A673 (cell line): ENCODE measurements at regions of chr13 and their contacts with region 1.

Region 1: DNA sequence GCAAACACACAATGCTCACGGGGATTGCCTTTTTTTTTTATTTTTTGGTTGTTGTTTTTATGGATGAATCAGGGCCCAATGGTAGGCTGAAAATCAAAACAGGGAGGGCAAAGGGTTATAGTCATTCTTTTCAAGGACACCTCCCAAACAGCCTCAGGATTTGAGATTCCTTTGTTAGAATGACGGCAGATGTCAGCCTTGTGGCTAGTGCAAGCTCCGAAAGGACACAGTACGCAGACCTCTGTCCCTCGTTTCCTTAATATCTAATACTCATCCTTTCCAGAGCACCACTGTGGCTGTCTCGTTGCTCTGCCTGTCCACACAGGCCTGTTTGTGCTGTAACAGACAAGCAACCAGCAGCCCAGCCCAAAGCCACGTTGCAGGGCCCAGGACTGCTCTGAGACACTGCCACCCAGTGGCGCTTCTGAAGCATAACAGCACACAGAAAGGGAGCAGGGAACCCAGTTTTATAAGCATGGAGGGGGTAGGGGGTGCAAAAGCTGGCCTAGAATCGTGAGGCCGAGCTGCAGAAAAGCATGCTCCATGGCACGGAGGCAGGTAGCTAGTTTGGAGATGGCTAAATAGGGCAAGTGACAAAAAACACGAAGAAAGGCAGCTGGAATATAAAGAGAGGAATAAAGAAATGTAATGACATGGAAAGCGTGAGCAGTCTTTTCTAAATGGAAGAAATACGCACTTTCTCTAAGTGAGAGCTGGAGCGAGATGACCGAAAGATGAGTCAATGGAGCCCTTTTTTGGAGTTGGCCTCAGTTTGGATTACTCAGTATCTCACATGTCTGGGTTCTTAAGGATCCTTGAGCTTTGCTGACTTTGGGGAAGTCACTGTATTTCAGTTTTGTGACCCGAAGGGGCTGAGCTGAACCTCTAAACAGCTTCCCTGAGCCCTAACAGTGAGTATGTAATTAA is 40.7 kb upstream of the MEDAG start:
- DNase-seq: peak; percentile 91
- H3K4me3 ChIP-seq: no peak overlapping the region
- H3K27ac ChIP-seq: no peak overlapping the region
- H3K4me1 ChIP-seq: peaks cover 14% of the 10 kb centered on the region
- H3K27me3 ChIP-seq: no peaks in the 10 kb centered on the region
- CTCF ChIP-seq: peak; percentile 98

Region 2: GRCh38 chr13:30679483-30680330 is 185.7 kb before region 1 on chr13:
- CTCF ChIA-PET with region 1: no interaction called
- POLR2A ChIA-PET with region 1: no interaction called
- intact Hi-C with region 1: loop called (anchors 5 kb)
- DNase-seq: peak; percentile 56
- H3K4me3 ChIP-seq: no peak overlapping the region
- H3K27ac ChIP-seq: no peak overlapping the region
- H3K4me1 ChIP-seq: no peaks in the 10 kb centered on the region
- H3K27me3 ChIP-seq: no peaks in the 10 kb centered on the region
- CTCF ChIP-seq: peak; percentile 61

Region 3: DNA sequence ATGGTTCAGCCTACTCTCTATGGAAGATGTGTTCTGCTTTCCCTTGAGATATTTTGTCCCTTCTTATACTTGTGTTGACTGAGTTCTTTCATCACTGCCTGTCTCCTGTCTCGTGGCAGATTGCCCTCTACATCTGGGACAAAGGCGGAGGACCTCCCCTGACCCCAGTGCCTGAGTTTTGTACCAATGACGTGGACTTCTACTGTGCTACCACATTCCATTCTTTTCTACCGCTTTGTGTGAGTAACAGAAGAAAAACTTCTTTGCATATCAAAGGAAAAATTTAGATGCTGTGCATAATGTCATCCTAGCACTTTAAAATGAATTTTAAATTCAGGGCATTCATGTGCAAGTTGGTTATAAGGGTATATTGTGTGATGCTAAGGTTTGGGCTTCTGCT is 409.0 kb after region 1 on chr13:
- CTCF ChIA-PET with region 1: no interaction called
- POLR2A ChIA-PET with region 1: no interaction called
- intact Hi-C with region 1: no loop called
- DNase-seq: no peak
- H3K4me3 ChIP-seq: no peak overlapping the region
- H3K27ac ChIP-seq: no peak overlapping the region
- H3K4me1 ChIP-seq: no peaks in the 10 kb centered on the region
- H3K27me3 ChIP-seq: no peaks in the 10 kb centered on the region
- CTCF ChIP-seq: no peak